Pancreas (tissue), 10 donors: ENCODE measurements at regions of chr7 and their contacts with region 1.

Region 1: DNA sequence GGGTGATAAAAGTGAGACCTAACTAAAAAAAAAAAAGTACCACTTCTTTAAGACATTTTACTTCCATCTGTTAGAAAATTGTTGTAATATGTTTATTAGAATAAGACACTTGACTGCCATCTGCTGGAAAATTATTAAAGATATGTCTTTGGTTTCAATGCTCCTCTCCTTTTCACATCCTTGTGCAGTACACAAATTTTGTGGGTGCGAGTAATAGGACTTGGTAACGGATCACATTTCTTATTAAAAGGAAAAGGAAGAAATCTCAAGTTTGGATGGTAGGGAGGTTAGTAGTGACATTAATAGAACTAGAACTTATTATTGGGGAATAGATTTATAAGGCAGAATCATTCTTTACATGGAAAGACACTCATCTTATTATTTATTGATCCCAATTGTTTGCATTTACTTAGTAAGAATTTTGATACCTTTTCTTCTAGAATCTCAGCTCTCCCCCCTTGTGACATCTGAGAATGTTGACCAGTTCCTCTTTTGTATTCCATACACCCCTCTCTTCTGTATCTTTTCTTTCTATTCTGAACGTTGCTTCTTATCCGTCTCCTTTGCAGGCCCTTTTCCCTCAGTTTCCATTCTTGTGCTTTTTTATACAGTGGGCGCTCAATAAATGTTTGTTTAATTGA is 43.1 kb upstream of the RPA3 start:
- DNase-seq: no peak
- ATAC-seq: peak in 3 of 4 donors; percentile 57 to 69 (median 67)
- H3K4me3 ChIP-seq: peak overlapping the region in 1 of 4 donors; percentile 26
- H3K27ac ChIP-seq: peak overlapping the region in 1 of 4 donors; percentile 17
- H3K4me1 ChIP-seq: peaks cover 11 to 21% (median 12%) of the 10 kb centered on the region in 3 donors
- H3K27me3 ChIP-seq: no peaks in the 10 kb centered on the region
- CTCF ChIP-seq: no peak

Region 2: DNA sequence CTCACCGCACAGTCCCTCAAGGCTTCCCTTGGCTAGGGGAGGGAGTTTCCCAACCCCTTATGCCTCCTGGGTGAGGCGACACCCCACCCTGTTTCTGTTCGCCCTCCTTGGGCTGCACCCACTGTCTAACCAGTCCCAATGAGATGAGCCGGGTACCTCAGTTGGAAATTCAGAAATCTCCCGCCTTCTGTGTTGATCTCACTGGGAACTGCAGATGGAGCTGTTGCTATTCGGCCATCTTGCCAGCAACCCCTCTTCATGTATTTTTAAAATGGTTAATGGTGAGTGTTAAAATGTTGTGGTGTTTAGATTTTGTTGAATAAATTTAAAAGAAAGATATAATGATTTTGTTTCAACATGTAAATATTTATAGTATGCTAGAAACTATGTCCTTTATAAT is 98.9 kb before region 1 on chr7:
- intact Hi-C with region 1: no loop called
- DNase-seq: peak in 1 of 6 donors; percentile 37
- ATAC-seq: no peak
- H3K4me3 ChIP-seq: no peak overlapping the region
- H3K27ac ChIP-seq: no peak overlapping the region
- H3K4me1 ChIP-seq: peaks cover 0 to 16% (median 3%) of the 10 kb centered on the region in 3 donors
- H3K27me3 ChIP-seq: no peaks in the 10 kb centered on the region
- CTCF ChIP-seq: no peak

Region 3: DNA sequence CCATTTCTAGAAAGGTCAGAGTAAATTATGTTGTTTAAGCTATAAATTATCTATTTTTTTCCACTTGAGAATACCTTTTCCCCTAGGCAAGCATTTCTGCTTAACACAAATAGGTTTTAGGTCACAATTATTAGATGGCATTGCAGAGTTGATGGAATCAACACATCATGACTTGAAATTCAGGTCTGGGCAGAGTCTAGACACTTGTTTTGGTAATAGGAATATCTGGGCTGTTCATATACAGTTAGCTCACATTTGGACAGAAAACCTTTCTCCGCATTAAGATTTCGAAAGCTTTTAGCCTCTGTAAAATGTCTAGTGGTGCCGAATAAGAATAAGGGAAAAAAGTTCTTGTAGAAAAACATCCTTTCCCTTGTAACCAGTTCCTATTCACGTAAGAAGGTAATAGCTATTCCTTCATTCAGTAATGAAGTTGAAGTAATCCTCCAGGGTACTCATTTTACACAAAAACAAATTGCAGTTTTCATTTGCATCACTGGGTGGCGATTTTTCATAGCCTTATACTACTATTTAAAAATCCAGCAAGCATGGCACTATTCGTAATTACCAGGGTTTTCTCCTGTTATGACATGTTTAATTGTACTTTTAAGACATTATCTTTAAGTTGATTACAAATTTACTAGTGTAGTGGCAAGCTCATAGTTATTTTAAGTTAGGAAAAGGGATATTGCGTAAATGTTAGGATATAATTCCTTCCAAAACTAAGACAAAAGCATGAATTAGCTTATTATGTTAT is 80.1 kb before region 1 on chr7:
- intact Hi-C with region 1: loop called in 1 of 3 experiments (anchors 10 kb)
- DNase-seq: peak in 3 of 6 donors; percentile 33 to 46 (median 43)
- ATAC-seq: peak; percentile 82 to 96 (median 92)
- H3K4me3 ChIP-seq: no peak overlapping the region
- H3K27ac ChIP-seq: peak overlapping the region in 2 of 4 donors; percentile 62 to 65
- H3K4me1 ChIP-seq: peaks cover 20 to 26% (median 22%) of the 10 kb centered on the region in 3 donors
- H3K27me3 ChIP-seq: no peaks in the 10 kb centered on the region
- CTCF ChIP-seq: peak in 2 of 4 donors; percentile 34 to 40